Mammary epithelial cell (primary cell): ENCODE measurements at regions of chr16 and their contacts with region 1.

Region 1: DNA sequence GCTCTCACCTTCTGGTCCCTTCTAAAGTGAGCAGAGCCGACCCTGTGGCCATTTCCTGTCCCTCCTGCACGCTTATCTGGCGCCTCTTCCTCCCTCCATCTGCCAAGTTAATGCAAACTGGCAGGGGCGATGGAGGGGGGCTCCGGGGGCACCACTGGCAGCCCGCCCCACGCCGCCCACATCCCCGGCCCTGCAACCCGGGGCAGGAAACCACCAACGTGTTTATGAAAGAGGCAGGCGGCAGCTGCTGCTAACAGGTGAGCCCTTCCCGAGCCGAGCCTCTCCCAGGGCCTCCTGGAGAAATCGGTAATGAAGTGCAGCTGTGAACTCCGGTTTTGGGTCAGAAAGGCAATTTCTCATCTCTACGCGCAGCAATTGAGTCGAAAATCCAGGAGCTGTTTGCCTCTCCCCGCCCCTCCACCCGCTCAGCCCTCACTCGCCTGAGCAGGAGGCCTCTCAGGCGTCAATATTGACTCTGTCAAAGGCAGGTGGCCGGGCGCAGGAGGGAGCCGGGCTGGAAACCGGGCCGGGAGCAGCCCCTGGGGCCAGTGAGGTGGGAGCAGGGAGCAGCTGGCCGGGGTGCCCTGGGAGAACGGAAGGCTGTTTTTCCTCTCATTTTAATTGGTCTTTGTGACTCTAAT is 164.4 kb upstream of the GSE1 start:
- DNase-seq: no peak
- H3K4me3 ChIP-seq: no peak overlapping the region
- H3K27ac ChIP-seq: no peak overlapping the region
- H3K4me1 ChIP-seq: no peaks in the 10 kb centered on the region
- H3K27me3 ChIP-seq: peaks cover 3% of the 10 kb centered on the region
- CTCF ChIP-seq: no peak

Region 2: DNA sequence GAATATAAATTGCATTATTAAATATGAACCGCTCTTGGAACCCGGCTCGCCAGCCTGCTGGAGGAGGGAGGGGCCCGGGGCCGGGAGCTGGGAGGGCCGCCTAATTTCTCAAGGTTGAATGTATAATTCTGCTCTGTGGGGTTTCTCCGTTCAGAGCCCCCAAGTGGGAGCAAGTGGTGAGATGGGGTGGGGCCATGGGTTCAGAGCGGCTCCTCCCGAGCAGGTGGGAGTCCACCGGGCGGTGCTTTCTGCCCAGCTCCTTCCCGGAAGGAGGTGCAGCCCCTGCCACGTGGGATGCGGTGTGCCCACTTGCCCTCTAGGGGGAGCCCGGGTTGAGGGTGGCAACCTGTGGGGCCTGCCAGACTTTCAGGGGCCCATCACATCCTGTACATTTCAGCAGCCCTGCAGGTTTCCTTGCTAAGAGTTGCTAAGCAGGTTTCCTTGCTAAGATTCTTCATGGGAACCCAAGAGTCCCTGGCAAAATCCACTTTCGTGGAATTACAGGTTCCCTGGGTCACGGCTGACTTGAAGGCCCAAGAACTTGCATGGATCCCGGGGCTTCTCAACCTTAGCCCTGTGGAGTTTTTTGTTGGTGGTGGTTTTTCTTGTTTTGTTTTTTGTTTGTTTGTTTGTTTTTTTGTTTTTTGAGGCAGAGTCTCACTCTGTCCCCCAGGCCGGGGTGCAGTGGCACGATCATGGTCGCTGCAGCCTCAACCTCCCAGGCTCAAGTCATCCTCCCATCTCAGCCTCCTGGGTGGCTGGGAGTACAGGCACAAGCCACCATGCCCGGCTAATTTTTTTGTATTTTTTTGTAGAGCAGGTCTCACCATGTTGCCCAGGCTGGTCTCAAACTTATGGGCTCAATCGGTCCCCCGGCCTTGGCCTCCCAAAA is 32.2 kb before region 1 on chr16:
- CTCF ChIA-PET with region 1: no interaction called
- dilution Hi-C with region 1: no loop called
- in situ Hi-C with region 1: no loop called
- intact Hi-C with region 1: no loop called
- DNase-seq: peak; percentile 13
- H3K4me3 ChIP-seq: no peak overlapping the region
- H3K27ac ChIP-seq: no peak overlapping the region
- H3K4me1 ChIP-seq: no peaks in the 10 kb centered on the region
- H3K27me3 ChIP-seq: no peaks in the 10 kb centered on the region
- CTCF ChIP-seq: peak; percentile 69 to 83

Region 3: GRCh38 chr16:85498273-85499006 is 49.8 kb after region 1 on chr16:
- CTCF ChIA-PET with region 1: no interaction called
- dilution Hi-C with region 1: loop called (anchors 5 kb)
- in situ Hi-C with region 1: no loop called
- intact Hi-C with region 1: no loop called
- DNase-seq: no peak
- H3K4me3 ChIP-seq: no peak overlapping the region
- H3K27ac ChIP-seq: no peak overlapping the region
- H3K4me1 ChIP-seq: no peaks in the 10 kb centered on the region
- H3K27me3 ChIP-seq: no peaks in the 10 kb centered on the region
- CTCF ChIP-seq: no peak

Region 4: GRCh38 chr16:85536073-85536410 is 87.4 kb after region 1 on chr16:
- CTCF ChIA-PET with region 1: no interaction called
- dilution Hi-C with region 1: loop called (anchors 5 kb)
- in situ Hi-C with region 1: no loop called
- intact Hi-C with region 1: no loop called
- DNase-seq: no peak
- H3K4me3 ChIP-seq: no peak overlapping the region
- H3K27ac ChIP-seq: no peak overlapping the region
- H3K4me1 ChIP-seq: no peaks in the 10 kb centered on the region
- H3K27me3 ChIP-seq: no peaks in the 10 kb centered on the region
- CTCF ChIP-seq: no peak

Region 5: DNA sequence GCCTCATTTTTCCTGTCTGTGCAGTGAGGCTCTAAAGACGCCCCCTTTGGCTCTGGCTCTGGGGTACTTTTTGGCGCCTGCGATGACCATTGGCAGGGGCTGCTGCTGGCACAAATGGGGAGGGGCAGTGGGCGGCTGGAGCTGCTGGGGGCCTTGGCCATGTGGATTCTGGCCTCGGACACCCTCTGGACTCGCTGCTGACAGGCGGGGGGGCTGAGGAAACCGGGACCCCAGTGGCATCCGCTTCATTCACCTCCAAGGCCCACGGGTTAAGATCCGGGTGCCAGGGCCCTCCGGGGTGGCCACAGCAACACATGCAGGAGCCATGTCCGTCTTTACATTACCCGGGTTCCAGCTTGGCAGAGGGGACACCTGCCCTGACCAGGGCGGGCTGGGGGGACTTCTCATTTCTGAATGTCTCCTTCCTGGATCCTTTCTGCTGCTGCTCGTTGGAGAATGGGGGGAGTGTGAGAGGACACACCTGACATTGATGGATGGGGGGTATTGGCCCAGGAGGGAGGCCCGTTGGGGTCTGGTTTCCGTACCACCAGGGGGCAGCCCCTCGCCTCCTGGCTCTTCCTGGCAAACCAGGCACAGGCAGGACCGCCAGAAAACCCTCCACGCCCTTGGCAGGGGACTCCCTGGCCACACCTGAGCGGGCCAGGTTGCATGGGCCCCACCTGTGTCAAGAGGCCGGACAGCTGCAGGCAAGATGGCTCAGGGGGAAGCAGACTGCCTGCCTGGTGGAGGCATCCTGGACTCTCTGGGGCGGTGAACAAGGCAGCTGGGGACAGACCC is 186.3 kb after region 1 on chr16:
- CTCF ChIA-PET with region 1: interaction called, 14 read pairs
- dilution Hi-C with region 1: no loop called
- in situ Hi-C with region 1: no loop called
- intact Hi-C with region 1: no loop called
- DNase-seq: no peak
- H3K4me3 ChIP-seq: no peak overlapping the region
- H3K27ac ChIP-seq: no peak overlapping the region
- H3K4me1 ChIP-seq: peaks cover 31% of the 10 kb centered on the region
- H3K27me3 ChIP-seq: no peaks in the 10 kb centered on the region
- CTCF ChIP-seq: peak; percentile 11 to 38